H1 (cell line): ENCODE measurements at regions of chr6 and their contacts with region 1.

Region 1: DNA sequence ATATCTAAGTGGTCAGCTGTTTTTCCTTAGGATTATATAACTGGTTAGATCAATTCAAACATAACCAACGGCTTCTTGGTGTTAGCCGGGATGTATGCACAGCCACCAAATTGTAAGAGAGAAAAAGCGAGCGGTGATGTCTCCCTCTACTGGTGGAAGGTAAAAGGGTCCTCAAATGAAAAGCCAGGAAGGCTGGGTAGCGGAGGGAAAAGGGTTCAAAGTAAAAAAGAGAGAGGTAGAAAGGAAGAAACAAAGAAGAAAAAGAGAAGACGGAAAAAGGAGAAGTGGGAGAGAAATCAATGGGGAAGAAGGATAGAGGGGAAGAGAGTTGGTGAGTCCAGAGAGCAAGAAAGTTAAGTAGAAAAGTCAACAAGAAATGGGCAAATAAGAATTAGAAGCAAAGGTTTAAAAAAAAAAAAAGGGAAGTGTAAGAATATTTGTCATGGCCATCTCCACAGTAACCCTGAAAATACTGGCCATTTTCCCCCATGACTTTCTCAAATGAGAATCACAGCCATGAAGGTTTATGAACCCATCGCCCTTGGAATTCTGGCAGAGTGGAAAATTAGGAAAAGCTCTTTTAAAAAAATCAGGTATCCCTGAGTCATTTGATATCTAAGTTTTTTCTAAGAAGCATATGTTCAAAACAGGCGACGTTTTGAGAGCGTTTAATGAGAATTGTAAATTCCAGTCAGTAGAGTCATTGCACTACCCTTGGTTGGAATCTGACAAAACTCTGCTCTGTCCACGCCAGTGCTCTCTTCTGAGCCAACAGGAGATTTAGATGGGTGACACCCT is 155.6 kb upstream of the SNX9 start:
- DNase-seq: peak in 1 of 2 experiments; percentile 69
- H3K4me3 ChIP-seq: no peak overlapping the region
- H3K27ac ChIP-seq: no peak overlapping the region
- H3K4me1 ChIP-seq: peaks cover 3 to 14% (median 6%) of the 10 kb centered on the region in 4 experiments; a peak in 6 of 7 replicates
- H3K27me3 ChIP-seq: no peaks in the 10 kb centered on the region; a peak in 1 of 7 replicates
- CTCF ChIP-seq: peak; percentile 39 to 70 (median 68)
- EP300 ChIP-seq: no peak
- POLR2A ChIP-seq: no peak
- RAD21 ChIP-seq: peak; percentile 86

Region 2: GRCh38 chr6:157314705-157315321 is 352.6 kb before region 1 on chr6:
- CTCF ChIA-PET with region 1: interaction called, 17 read pairs
- POLR2A ChIA-PET with region 1: no interaction called
- DNase-seq: no peak
- H3K4me3 ChIP-seq: no peak overlapping the region
- H3K27ac ChIP-seq: no peak overlapping the region
- H3K4me1 ChIP-seq: no peaks in the 10 kb centered on the region
- H3K27me3 ChIP-seq: no peaks in the 10 kb centered on the region
- CTCF ChIP-seq: peak in 2 of 3 experiments; percentile 84 to 98; a peak in 3 of 4 replicates
- EP300 ChIP-seq: no peak
- POLR2A ChIP-seq: no peak
- RAD21 ChIP-seq: peak; percentile 82 to 85

Region 3: GRCh38 chr6:157339432-157339831 is 328.0 kb before region 1 on chr6:
- CTCF ChIA-PET with region 1: interaction called, 10 read pairs
- POLR2A ChIA-PET with region 1: no interaction called
- DNase-seq: no peak
- H3K4me3 ChIP-seq: no peak overlapping the region
- H3K27ac ChIP-seq: no peak overlapping the region
- H3K4me1 ChIP-seq: no peaks in the 10 kb centered on the region
- H3K27me3 ChIP-seq: no peaks in the 10 kb centered on the region
- CTCF ChIP-seq: peak; percentile 15 to 48 (median 31)
- EP300 ChIP-seq: no peak
- POLR2A ChIP-seq: no peak
- RAD21 ChIP-seq: peak; percentile 60 to 69

Region 4: GRCh38 chr6:157358287-157358686 is 309.1 kb before region 1 on chr6:
- CTCF ChIA-PET with region 1: no interaction called
- POLR2A ChIA-PET with region 1: no interaction called
- DNase-seq: no peak
- H3K4me3 ChIP-seq: no peak overlapping the region
- H3K27ac ChIP-seq: no peak overlapping the region
- H3K4me1 ChIP-seq: no peaks in the 10 kb centered on the region
- H3K27me3 ChIP-seq: no peaks in the 10 kb centered on the region
- CTCF ChIP-seq: no peak
- EP300 ChIP-seq: no peak
- POLR2A ChIP-seq: no peak
- RAD21 ChIP-seq: no peak

Region 5: GRCh38 chr6:157494132-157494710 is 173.2 kb before region 1 on chr6:
- CTCF ChIA-PET with region 1: no interaction called
- POLR2A ChIA-PET with region 1: no interaction called
- DNase-seq: no peak
- H3K4me3 ChIP-seq: no peak overlapping the region
- H3K27ac ChIP-seq: no peak overlapping the region
- H3K4me1 ChIP-seq: peaks cover 0 to 8% (median 2%) of the 10 kb centered on the region in 4 experiments; a peak in 4 of 7 replicates
- H3K27me3 ChIP-seq: no peaks in the 10 kb centered on the region
- CTCF ChIP-seq: no peak
- EP300 ChIP-seq: no peak
- POLR2A ChIP-seq: no peak
- RAD21 ChIP-seq: no peak

Region 6: DNA sequence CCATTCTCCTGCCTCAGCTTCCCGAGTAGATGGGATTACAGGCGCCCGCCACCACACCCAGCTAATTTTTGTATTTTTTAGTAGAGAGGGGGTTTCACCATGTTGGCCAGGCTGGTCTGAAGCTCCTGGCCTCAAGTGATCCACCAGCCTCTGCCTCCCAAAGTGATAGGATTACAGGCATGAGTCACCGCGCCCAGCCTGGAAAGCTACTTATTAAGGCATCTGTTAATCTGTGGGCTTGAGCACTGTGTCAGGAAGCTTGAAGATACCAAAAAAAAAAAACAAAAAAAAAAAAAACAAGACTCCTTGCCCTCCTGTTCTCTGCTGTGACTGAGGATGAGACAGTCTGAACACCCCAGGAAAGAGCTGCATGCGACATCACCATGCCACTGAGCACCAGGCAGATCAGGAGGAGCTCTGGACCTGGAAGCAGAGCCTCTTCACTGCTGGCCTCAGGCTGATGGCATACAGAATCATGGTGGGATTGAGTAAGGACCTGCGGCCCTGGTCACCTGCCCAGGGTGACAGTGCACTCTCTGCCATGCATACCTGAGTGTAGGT is 10.9 kb before region 1 on chr6:
- CTCF ChIA-PET with region 1: interaction called, 25 read pairs
- POLR2A ChIA-PET with region 1: interaction called, 3 read pairs
- DNase-seq: no peak
- H3K4me3 ChIP-seq: no peak overlapping the region
- H3K27ac ChIP-seq: no peak overlapping the region
- H3K4me1 ChIP-seq: peaks cover 0 to 3% (median 0%) of the 10 kb centered on the region in 4 experiments; a peak in 2 of 7 replicates
- H3K27me3 ChIP-seq: no peaks in the 10 kb centered on the region
- CTCF ChIP-seq: no peak
- EP300 ChIP-seq: no peak
- POLR2A ChIP-seq: no peak
- RAD21 ChIP-seq: no peak

Region 7: GRCh38 chr6:157688960-157689599 is 21.7 kb after region 1 on chr6:
- CTCF ChIA-PET with region 1: interaction called, 30 read pairs
- POLR2A ChIA-PET with region 1: no interaction called
- DNase-seq: peak in 1 of 2 experiments; percentile 60
- H3K4me3 ChIP-seq: no peak overlapping the region
- H3K27ac ChIP-seq: no peak overlapping the region
- H3K4me1 ChIP-seq: peaks cover 0 to 2% (median 0%) of the 10 kb centered on the region in 4 experiments; a peak in 1 of 7 replicates
- H3K27me3 ChIP-seq: no peaks in the 10 kb centered on the region; a peak in 2 of 7 replicates
- CTCF ChIP-seq: peak; percentile 34 to 67 (median 59)
- EP300 ChIP-seq: no peak
- POLR2A ChIP-seq: no peak
- RAD21 ChIP-seq: peak; percentile 68 to 77